ENCODE measurements at regions of chr1 and their contacts with region 1.

Region 1: DNA sequence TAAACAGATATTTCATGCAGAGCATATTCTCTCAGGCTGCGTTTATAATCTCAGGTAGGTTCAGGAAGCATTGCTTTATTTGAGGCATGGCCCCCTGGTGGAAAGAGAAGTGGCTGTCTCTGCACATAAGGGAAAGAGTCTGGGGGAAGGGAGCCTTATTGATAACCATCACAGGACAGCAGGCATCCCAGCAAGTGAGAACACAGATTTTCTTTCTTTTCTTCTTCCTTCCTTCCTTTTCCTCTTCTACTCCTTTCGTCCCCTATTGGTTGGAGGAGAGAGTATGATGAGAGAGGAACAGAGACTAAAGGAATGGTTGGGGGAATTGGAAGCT is 21.9 kb downstream of the TSNAX start:
- DNase-seq: peak; percentile 53 to 62
- H3K4me3 ChIP-seq: no peak overlapping the region
- H3K4me3 Mint-ChIP-seq: no peak overlapping the region
- H3K27ac Mint-ChIP-seq: no peak overlapping the region
- H3K4me1 ChIP-seq: no peaks in the 10 kb centered on the region
- H3K4me1 Mint-ChIP-seq: peaks cover 5% of the 10 kb centered on the region
- H3K27me3 ChIP-seq: no peaks in the 10 kb centered on the region
- H3K27me3 Mint-ChIP-seq: no peaks in the 10 kb centered on the region
- CTCF ChIP-seq: peak; percentile 73 to 84

Region 2: GRCh38 chr1:231000639-231001038 is 549.8 kb before region 1 on chr1:
- CTCF ChIA-PET with region 1: no interaction called
- POLR2A ChIA-PET with region 1: interaction called, 12 read pairs
- intact Hi-C with region 1: no loop called
- DNase-seq: no peak
- H3K4me3 ChIP-seq: no peak overlapping the region
- H3K4me3 Mint-ChIP-seq: no peak overlapping the region
- H3K27ac Mint-ChIP-seq: no peak overlapping the region
- H3K4me1 ChIP-seq: no peaks in the 10 kb centered on the region
- H3K4me1 Mint-ChIP-seq: no peaks in the 10 kb centered on the region
- H3K27me3 ChIP-seq: no peaks in the 10 kb centered on the region
- H3K27me3 Mint-ChIP-seq: no peaks in the 10 kb centered on the region
- CTCF ChIP-seq: no peak

Region 3: GRCh38 chr1:231357831-231358354 is 192.5 kb before region 1 on chr1:
- CTCF ChIA-PET with region 1: interaction called, 3 read pairs
- POLR2A ChIA-PET with region 1: no interaction called
- intact Hi-C with region 1: loop called (anchors 2 kb)
- DNase-seq: peak in 1 of 2 experiments; percentile 57
- H3K4me3 ChIP-seq: no peak overlapping the region
- H3K4me3 Mint-ChIP-seq: no peak overlapping the region
- H3K27ac Mint-ChIP-seq: no peak overlapping the region
- H3K4me1 ChIP-seq: no peaks in the 10 kb centered on the region
- H3K4me1 Mint-ChIP-seq: no peaks in the 10 kb centered on the region
- H3K27me3 ChIP-seq: no peaks in the 10 kb centered on the region
- H3K27me3 Mint-ChIP-seq: no peaks in the 10 kb centered on the region
- CTCF ChIP-seq: peak; percentile 64 to 76

Region 4: GRCh38 chr1:231446138-231446537 is 104.3 kb before region 1 on chr1:
- CTCF ChIA-PET with region 1: no interaction called
- POLR2A ChIA-PET with region 1: no interaction called
- intact Hi-C with region 1: no loop called
- DNase-seq: no peak
- H3K4me3 ChIP-seq: no peak overlapping the region
- H3K4me3 Mint-ChIP-seq: no peak overlapping the region
- H3K27ac Mint-ChIP-seq: no peak overlapping the region
- H3K4me1 ChIP-seq: no peaks in the 10 kb centered on the region
- H3K4me1 Mint-ChIP-seq: no peaks in the 10 kb centered on the region
- H3K27me3 ChIP-seq: no peaks in the 10 kb centered on the region
- H3K27me3 Mint-ChIP-seq: peaks cover 3% of the 10 kb centered on the region
- CTCF ChIP-seq: no peak

Region 5: DNA sequence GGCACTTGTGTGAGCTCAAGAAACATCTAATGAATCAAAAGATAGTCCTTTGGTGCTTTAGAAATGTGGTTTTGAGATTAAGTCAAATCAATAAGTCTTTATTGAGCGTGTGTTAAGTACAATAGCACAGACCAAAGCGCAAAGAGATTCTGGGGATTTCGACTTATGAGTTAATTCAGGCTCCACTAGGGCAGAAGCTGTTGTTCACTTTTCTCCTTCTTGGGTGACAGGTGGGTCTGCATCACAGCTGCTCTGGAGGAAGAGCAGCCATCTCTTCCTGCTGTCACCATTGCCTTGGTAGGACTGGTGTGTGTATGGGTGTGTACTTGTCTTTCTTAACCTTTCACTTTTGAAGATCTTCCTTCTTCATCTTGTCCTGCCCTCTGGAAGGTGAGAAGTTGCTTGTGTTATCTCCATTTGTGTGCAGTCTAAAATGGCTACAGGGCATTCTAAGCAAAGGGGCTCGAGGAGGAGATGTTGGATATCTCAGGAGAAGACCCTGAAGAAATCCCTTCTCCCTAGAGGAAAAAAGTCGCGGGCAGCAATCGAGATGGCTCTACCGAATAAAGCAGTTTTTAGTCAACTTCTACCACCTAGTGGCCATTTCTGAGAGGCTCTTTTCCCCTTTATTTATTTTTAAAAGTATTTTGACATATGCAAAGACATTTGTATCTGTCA is 53.3 kb after region 1 on chr1:
- CTCF ChIA-PET with region 1: no interaction called
- POLR2A ChIA-PET with region 1: no interaction called
- intact Hi-C with region 1: loop called (anchors 1 kb)
- DNase-seq: peak; percentile 56 to 69
- H3K4me3 ChIP-seq: peak overlapping the region; percentile 38
- H3K4me3 Mint-ChIP-seq: peak overlapping the region; percentile 79
- H3K27ac Mint-ChIP-seq: peak overlapping the region; percentile 61
- H3K4me1 ChIP-seq: no peaks in the 10 kb centered on the region
- H3K4me1 Mint-ChIP-seq: peaks cover 10% of the 10 kb centered on the region
- H3K27me3 ChIP-seq: no peaks in the 10 kb centered on the region
- H3K27me3 Mint-ChIP-seq: no peaks in the 10 kb centered on the region
- CTCF ChIP-seq: peak; percentile 54 to 77

Measured in Caco-2 (cell line).